Tibial artery (tissue), 4 donors: ENCODE measurements at regions of chr1 and their contacts with region 1.

Region 1: GRCh38 chr1:205485338-205486228 is 18.9 kb upstream of the CDK18 start:
- DNase-seq: peak; percentile 33 to 70
- H3K4me3 ChIP-seq: no peak overlapping the region
- H3K27ac ChIP-seq: no peak overlapping the region
- H3K4me1 ChIP-seq: peaks cover 0 to 5% (median 2%) of the 10 kb centered on the region in 4 donors
- H3K27me3 ChIP-seq: peaks cover 0 to 45% of the 10 kb centered on the region in 2 donors
- CTCF ChIP-seq: peak; percentile 92 to 95

Region 2: GRCh38 chr1:205354259-205354904 is 131.2 kb before region 1 on chr1:
- intact Hi-C with region 1: loop called (anchors 5 kb)
- DNase-seq: peak in 1 of 2 donors; percentile 67
- H3K4me3 ChIP-seq: no peak overlapping the region
- H3K27ac ChIP-seq: no peak overlapping the region
- H3K4me1 ChIP-seq: peaks cover 0 to 9% (median 0%) of the 10 kb centered on the region in 4 donors
- H3K27me3 ChIP-seq: peaks cover 0 to 19% of the 10 kb centered on the region in 2 donors
- CTCF ChIP-seq: peak; percentile 77 to 79

Region 3: GRCh38 chr1:205523891-205524793 is 38.6 kb after region 1 on chr1:
- intact Hi-C with region 1: loop called (anchors 1 kb)
- DNase-seq: peak; percentile 58 to 86
- H3K4me3 ChIP-seq: no peak overlapping the region
- H3K27ac ChIP-seq: no peak overlapping the region
- H3K4me1 ChIP-seq: peaks cover 0 to 35% (median 16%) of the 10 kb centered on the region in 4 donors
- H3K27me3 ChIP-seq: no peaks in the 10 kb centered on the region
- CTCF ChIP-seq: peak; percentile 68 to 91